Activated CD4-positive, alpha-beta memory T cell treated with anti-CD3 and anti-CD28 coated beads for 36 hours (primary cell): ENCODE measurements at regions of chr12 and their contacts with region 1.

Region 1: DNA sequence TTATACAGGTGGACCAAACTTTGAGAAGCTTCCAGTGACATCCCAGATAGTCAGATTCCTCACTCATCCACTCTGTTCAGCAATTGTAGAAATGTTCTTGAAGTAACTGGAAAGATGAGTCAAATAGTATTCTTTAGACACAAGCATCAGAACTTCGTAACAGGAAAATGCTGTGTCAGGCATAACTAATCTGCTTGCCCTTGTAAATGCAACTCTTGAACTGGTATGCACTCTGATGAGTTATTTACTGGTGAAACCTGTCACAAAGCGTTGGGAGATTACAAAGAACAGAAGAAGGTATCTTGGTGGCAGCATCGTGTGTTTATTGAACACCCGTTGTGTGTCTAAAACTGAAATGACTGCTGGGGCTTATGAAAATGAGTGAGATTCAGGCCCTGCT is 10.8 kb upstream of the DUSP6 start:
- DNase-seq: peak; percentile 18
- H3K4me3 Mint-ChIP-seq: no peak overlapping the region
- H3K27ac Mint-ChIP-seq: peak overlapping the region; percentile 74
- H3K4me1 Mint-ChIP-seq: peaks cover 16% of the 10 kb centered on the region
- H3K27me3 Mint-ChIP-seq: no peaks in the 10 kb centered on the region

Region 2: GRCh38 chr12:89212339-89212771 is 150.7 kb before region 1 on chr12:
- CTCF ChIA-PET with region 1: no interaction called
- POLR2A ChIA-PET with region 1: no interaction called
- intact Hi-C with region 1: no loop called
- DNase-seq: no peak
- H3K4me3 Mint-ChIP-seq: no peak overlapping the region
- H3K27ac Mint-ChIP-seq: no peak overlapping the region
- H3K4me1 Mint-ChIP-seq: peaks cover 15% of the 10 kb centered on the region
- H3K27me3 Mint-ChIP-seq: no peaks in the 10 kb centered on the region

Region 3: GRCh38 chr12:89376202-89376529 is 13.1 kb after region 1 on chr12:
- CTCF ChIA-PET with region 1: no interaction called
- POLR2A ChIA-PET with region 1: no interaction called
- intact Hi-C with region 1: loop called (anchors 1 kb)
- DNase-seq: no peak
- H3K4me3 Mint-ChIP-seq: no peak overlapping the region
- H3K27ac Mint-ChIP-seq: peak overlapping the region; percentile 62
- H3K4me1 Mint-ChIP-seq: peaks cover 20% of the 10 kb centered on the region
- H3K27me3 Mint-ChIP-seq: no peaks in the 10 kb centered on the region